AG04449 (cell line): ENCODE measurements at regions of chr1 and their contacts with region 1.

Region 1: DNA sequence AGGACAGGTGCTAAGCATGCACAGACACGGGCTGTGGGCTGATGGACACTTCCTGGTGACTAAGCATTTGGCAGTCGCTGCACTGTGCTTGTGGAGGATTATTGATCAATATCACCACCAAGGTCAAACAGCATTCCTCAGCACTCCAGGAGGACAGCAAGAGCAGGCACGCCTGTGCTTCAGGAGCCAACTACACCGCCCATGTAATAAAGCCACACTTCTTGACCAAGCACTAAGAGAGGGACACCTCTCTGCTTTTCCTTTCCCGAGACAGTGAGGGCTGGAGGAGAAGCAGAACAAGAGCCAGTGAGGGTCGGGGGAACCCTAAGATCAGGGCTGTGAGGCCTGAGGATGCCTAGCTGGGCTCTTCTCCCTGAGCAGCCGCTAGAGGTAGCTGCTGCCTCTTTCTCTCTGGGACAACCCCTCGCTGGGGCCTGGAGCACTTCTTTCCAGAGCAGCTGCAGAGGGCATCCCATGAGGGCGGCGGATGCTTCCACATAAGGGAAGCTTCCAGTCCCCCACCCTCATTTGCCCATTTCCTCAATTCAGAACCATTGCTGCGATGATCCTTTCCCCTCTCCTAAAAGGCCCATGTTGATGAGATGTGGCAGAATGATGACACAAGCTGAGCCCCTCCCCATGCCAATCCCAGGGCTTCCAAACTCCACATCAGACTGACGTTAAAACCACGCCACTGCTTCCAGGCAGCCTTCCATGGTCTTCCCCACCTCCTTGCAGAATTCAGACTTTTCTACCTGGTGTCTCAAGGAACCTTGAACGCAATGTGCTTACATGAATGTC is 19.1 kb downstream of the RAB7B start:
- DNase-seq: no peak
- H3K4me3 ChIP-seq: no peak overlapping the region
- CTCF ChIP-seq: peak; percentile 90

Region 2: DNA sequence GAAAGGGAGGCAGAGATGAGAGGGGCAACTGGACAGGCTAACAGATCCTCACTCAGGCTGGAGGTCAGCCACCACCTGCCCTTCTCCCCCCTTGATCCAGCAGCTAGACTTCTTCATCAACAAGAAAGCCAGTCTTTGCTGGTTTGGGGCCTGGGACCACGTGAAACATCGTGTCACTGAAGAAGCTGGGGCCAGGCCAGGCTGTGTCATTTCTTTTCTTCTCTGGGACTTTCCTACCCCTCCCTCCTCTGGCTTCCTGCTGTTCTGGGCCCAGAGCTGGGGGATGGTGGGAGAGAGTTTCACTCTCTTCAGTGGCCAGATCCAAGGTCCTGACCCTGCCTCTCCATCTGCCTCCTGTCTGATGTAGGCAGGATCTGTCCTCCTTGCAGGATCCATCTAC is 22.7 kb before region 1 on chr1:
- CTCF ChIA-PET with region 1: interaction called, 171 read pairs
- POLR2A ChIA-PET with region 1: no interaction called
- DNase-seq: no peak
- H3K4me3 ChIP-seq: no peak overlapping the region
- CTCF ChIP-seq: no peak

Region 3: GRCh38 chr1:206030714-206031113 is 46.6 kb after region 1 on chr1:
- CTCF ChIA-PET with region 1: interaction called, 18 read pairs
- POLR2A ChIA-PET with region 1: no interaction called
- DNase-seq: no peak
- H3K4me3 ChIP-seq: no peak overlapping the region
- CTCF ChIP-seq: peak; percentile 91

Region 4: GRCh38 chr1:206094024-206094423 is 109.9 kb after region 1 on chr1:
- CTCF ChIA-PET with region 1: interaction called, 16 read pairs
- POLR2A ChIA-PET with region 1: no interaction called
- DNase-seq: no peak
- H3K4me3 ChIP-seq: no peak overlapping the region
- CTCF ChIP-seq: no peak